CD8-positive, alpha-beta T cell (primary cell): ENCODE measurements at regions of chr16 and their contacts with region 1.

Region 1: DNA sequence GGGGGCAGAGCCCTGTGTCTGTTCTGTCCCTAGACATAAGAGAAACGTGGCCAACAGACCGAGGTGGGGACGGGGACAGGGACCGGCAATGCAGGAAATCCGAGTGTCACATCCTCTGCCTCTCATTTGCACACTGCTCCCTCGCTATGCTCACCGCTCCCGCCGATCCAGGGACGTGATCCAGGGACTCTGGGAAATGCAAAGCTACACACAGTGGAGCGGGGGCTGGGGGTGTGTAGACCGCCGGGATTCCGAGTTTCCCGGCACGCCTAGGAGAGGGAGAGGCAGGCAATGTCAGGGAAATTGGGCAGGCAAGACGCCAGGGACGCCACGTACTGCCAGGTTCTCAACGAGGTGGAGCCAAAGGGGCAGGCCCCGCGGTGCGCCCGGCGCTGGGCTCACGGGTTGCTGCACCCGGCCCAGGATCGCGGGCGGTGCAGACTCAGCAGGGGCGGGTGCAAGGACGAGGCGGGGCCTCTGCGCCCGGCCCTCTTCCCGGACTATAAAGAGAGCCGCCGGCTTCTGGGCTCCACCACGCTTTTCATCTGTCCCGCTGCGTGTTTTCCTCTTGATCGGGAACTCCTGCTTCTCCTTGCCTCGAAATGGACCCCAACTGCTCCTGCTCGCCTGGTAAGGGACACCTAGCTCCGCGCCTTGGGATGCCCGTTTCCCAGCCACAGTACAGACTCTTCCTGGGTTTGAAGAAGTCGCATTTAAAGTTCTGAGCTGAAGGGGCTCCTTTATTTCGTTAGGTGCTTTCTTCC is at the start of gene MT1X:
- DNase-seq: peak; percentile 63 to 94 (median 88)
- ATAC-seq: peak; percentile 99
- H3K4me3 ChIP-seq: peak within 1 kb of the TSS; percentile 58 to 82
- H3K4me3 Mint-ChIP-seq: peak within 1 kb of the TSS; percentile 96
- H3K27ac ChIP-seq: peak within 1 kb of the TSS; percentile 60 to 80
- H3K27ac Mint-ChIP-seq: peak within 1 kb of the TSS; percentile 97
- H3K4me1 ChIP-seq: peaks cover 18% of the 10 kb centered on the region
- H3K4me1 Mint-ChIP-seq: peaks cover 25% of the 10 kb centered on the region
- H3K27me3 ChIP-seq: no peaks in the 10 kb centered on the region
- H3K27me3 Mint-ChIP-seq: no peaks in the 10 kb centered on the region
- CTCF ChIP-seq: no peak
- total RNA-seq, gene MT1X: 18.6 to 26.2 TPM

Region 2: DNA sequence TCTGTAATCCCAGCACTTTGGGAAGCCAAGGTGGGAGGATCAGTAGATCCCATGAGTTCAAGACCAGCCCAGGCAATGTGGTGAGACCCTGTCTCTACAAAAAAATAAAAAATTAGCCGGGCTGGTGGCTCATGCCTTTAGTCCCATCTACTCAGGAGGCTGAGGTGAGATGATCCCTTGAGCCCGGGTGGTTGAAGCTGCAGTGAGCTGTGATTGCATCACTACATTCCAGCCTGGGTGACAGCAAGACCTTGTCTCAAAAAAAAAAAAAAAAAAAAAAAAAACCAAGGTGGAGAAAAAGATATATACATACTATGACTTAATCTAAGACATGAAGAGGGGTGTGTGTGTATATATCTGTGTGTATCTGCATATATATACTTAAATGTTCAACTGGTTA is 189.0 kb before region 1 on chr16:
- CTCF ChIA-PET with region 1: no interaction called
- POLR2A ChIA-PET with region 1: no interaction called
- intact Hi-C with region 1: no loop called
- DNase-seq: no peak
- ATAC-seq: no peak
- H3K4me3 ChIP-seq: no peak overlapping the region
- H3K4me3 Mint-ChIP-seq: no peak overlapping the region
- H3K27ac ChIP-seq: no peak overlapping the region
- H3K27ac Mint-ChIP-seq: no peak overlapping the region
- H3K4me1 ChIP-seq: no peaks in the 10 kb centered on the region
- H3K4me1 Mint-ChIP-seq: no peaks in the 10 kb centered on the region
- H3K27me3 ChIP-seq: no peaks in the 10 kb centered on the region
- H3K27me3 Mint-ChIP-seq: no peaks in the 10 kb centered on the region
- CTCF ChIP-seq: no peak

Region 3: DNA sequence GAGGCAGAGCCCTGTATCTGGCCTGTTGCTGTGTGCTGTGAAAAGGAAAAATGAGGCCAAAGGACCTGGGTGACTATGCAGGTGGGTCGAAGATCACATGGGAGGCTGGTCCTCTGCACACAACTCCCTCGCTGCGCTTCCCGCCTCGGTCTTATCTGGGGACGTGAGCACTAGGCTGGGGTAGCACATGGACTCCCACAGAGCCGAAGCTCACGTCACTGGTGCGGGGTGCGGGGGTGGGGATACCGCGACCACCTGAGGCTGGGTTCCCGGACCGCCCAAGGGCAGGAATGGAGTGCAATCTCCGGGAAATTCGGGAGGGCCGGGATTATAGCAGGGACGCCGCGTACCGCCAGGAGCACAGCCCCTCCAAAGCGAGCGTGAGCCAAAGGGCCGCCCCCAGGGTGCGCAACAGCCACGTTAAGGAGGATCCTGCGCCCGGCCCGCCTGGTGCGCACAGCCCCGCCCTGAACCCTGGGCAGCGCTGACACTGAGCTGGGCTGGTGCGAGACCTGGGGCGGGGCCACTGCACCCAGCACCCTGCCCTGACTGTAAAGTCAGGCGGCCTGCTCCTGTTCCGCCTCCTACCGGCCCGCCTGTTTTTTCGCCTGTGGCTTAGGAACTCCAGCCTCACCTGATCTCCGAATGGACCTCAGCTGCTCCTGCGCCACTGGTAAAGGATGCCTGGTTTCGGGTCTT is 38.9 kb before region 1 on chr16:
- CTCF ChIA-PET with region 1: interaction called, 4 read pairs
- POLR2A ChIA-PET with region 1: interaction called, 3 read pairs
- intact Hi-C with region 1: loop called (anchors 1 to 5 kb)
- DNase-seq: peak; percentile 52 to 92 (median 77)
- ATAC-seq: peak; percentile 99
- H3K4me3 ChIP-seq: peak overlapping the region; percentile 33 to 47
- H3K4me3 Mint-ChIP-seq: peak overlapping the region; percentile 71
- H3K27ac ChIP-seq: peak overlapping the region in 1 of 2 experiments; percentile 3
- H3K27ac Mint-ChIP-seq: no peak overlapping the region
- H3K4me1 ChIP-seq: peaks cover 11% of the 10 kb centered on the region
- H3K4me1 Mint-ChIP-seq: peaks cover 23% of the 10 kb centered on the region
- H3K27me3 ChIP-seq: peaks cover 3 to 5% of the 10 kb centered on the region in 2 experiments
- H3K27me3 Mint-ChIP-seq: peaks cover 23% of the 10 kb centered on the region
- CTCF ChIP-seq: peak; percentile 19

Region 4: GRCh38 chr16:56657555-56658326 is 24.4 kb before region 1 on chr16 and contains the start of gene MT1F:
- CTCF ChIA-PET with region 1: no interaction called
- POLR2A ChIA-PET with region 1: interaction called, 8 read pairs
- intact Hi-C with region 1: loop called (anchors 1 kb)
- DNase-seq: peak; percentile 32 to 86 (median 73)
- ATAC-seq: peak; percentile 78
- H3K4me3 ChIP-seq: peak within 1 kb of the TSS; percentile 68 to 70
- H3K4me3 Mint-ChIP-seq: peak within 1 kb of the TSS; percentile 97
- H3K27ac ChIP-seq: peak within 1 kb of the TSS; percentile 44 to 69
- H3K27ac Mint-ChIP-seq: peak within 1 kb of the TSS; percentile 94
- H3K4me1 ChIP-seq: peaks cover 20% of the 10 kb centered on the region
- H3K4me1 Mint-ChIP-seq: peaks cover 27% of the 10 kb centered on the region
- H3K27me3 ChIP-seq: no peaks in the 10 kb centered on the region
- H3K27me3 Mint-ChIP-seq: peaks cover 3% of the 10 kb centered on the region
- CTCF ChIP-seq: no peak
- total RNA-seq, gene MT1F: 5.6 to 7.4 TPM

Region 5: DNA sequence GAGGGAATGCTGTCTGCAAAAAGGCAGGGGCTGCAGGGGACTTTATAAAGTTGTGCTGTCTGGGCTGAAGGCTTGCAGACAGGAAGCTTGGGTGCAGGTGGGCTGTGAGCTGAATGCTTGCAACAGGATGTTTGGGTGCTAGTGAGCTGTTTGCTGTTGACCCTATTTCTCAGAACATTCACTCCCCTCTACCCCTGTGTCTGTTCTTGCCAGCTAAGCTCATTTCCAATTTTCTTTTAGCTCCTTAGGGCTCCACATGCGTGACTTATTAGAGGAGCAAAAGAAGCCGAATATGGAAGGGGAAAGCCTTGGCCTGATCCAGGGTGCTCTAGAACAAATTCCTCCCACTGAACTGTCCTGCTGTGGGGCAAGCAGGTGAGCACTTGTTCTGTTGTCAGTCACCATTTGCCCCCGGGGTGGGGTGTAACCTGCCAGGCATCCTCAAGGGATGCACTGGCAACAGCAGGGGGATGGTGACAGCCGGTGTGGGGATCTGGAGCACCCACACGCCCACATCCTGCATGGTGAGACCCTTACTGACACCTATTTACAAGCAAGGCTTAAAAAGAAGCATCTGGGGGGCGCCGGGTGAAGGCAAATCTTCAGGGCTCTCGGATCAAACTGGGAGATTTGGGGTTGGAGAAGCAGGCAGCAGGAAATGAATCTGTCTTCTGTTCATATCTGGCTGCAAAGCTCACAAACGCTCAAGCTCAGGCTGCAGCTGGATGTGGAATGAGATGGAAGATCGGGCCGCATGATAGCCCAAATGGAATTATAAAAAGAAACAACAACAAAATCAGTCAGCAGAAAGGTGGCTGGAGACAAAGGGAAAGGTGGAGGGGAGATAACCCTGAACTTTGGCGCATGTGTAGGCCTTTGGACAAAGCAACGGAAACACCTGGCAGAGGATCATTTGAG is 26.7 kb after region 1 on chr16:
- CTCF ChIA-PET with region 1: interaction called, 57 read pairs
- POLR2A ChIA-PET with region 1: interaction called, 12 read pairs
- intact Hi-C with region 1: loop called in 1 of 2 experiments (anchors 2 kb)
- DNase-seq: peak in 8 of 9 experiments; percentile 32 to 82 (median 58)
- ATAC-seq: peak; percentile 90
- H3K4me3 ChIP-seq: peak overlapping the region; percentile 53 to 65
- H3K4me3 Mint-ChIP-seq: peak overlapping the region; percentile 88
- H3K27ac ChIP-seq: peak overlapping the region; percentile 69 to 76
- H3K27ac Mint-ChIP-seq: peak overlapping the region; percentile 97
- H3K4me1 ChIP-seq: peaks cover 28% of the 10 kb centered on the region
- H3K4me1 Mint-ChIP-seq: peaks cover 62% of the 10 kb centered on the region
- H3K27me3 ChIP-seq: no peaks in the 10 kb centered on the region
- H3K27me3 Mint-ChIP-seq: no peaks in the 10 kb centered on the region
- CTCF ChIP-seq: no peak

Region 6: DNA sequence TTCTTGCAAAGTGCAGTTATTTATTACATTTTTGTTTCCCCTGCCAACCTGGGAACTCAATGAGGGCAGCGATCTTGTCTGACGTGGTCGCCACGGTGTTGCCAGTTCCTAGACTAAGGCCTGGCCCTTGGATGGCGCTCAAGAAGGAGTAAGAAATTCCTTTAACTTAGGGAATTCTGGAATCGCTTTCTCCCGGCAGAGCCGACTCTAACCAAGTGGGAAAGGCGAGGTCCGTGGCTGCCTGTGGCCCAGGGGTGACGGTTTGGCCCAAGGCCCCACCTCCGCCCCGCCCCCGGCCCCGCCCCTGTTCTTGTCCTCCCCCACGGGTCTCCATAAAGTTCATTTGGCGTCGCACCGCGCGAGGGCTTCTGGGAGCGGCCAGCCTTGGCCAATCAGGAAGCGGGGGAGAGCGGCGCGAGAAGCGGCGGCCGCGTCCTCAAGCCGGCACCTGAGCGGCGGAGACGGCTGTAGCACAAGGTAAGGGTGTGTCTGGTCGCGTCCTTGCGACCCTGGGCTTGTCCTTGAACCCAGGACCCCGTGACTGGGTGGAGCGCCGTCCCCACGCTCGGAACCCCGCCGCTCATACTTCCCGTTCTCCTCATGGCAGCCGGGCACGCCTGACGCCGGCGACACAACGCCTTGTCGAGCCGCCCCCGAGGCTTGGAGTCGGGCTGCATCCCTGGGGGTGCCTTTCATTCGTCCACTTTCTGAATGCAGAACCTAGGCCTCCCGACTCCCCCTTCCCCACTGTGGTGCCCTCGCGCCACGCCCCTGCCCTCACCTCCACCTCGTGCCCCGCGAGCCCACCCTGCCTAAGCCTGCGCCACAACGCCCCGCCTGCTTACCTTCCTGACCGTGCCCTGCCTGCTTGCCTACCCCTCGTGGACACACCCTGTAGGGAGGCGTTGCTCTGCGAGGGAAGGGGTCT is 47.9 kb after region 1 on chr16 and contains the start of gene NUP93:
- CTCF ChIA-PET with region 1: no interaction called
- POLR2A ChIA-PET with region 1: no interaction called
- intact Hi-C with region 1: loop called in 1 of 2 experiments (anchors 2 kb)
- DNase-seq: peak; percentile 76 to 94 (median 90)
- ATAC-seq: peak; percentile 94
- H3K4me3 ChIP-seq: peak within 1 kb of the TSS; percentile 79 to 87
- H3K4me3 Mint-ChIP-seq: no peak within 1 kb of the TSS
- H3K27ac ChIP-seq: peak within 1 kb of the TSS; percentile 58 to 81
- H3K27ac Mint-ChIP-seq: peak within 1 kb of the TSS; percentile 90
- H3K4me1 ChIP-seq: peaks cover 34% of the 10 kb centered on the region
- H3K4me1 Mint-ChIP-seq: peaks cover 23% of the 10 kb centered on the region
- H3K27me3 ChIP-seq: no peaks in the 10 kb centered on the region
- H3K27me3 Mint-ChIP-seq: no peaks in the 10 kb centered on the region
- CTCF ChIP-seq: no peak
- total RNA-seq, gene NUP93: 68.2 to 68.5 TPM

Region 7: DNA sequence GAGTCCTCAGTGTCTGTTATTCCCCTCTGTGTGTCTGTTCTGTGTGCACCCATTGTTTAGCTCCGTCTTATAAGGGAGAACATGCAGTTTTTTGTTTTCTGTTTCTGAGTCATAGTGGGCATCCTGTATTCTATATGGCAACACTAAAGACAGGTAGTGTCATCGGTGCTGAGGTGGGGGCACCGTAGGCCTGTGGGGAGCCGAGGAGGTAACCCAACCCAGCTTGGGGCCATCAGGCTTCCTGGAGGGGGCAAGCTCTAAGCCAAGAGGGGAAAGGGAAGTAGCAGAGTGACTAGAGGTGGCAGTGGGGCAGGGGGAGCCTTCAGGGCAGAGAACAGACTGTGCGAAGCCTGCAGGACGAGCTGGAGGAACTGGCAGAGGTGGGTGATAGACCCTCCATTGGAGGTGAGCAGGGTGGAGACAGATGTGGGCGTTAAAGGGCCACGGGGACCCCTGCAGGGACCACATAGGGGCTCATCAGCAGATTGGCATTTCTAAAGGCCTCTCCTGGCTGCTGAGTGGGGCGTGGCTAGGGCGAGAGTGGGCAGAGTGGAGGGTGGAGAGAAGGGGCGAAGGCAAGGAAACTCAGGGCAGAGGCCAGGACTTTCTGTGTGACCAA is 446.8 kb after region 1 on chr16:
- CTCF ChIA-PET with region 1: no interaction called
- POLR2A ChIA-PET with region 1: no interaction called
- intact Hi-C with region 1: no loop called
- DNase-seq: peak in 8 of 9 experiments; percentile 53 to 88 (median 70)
- ATAC-seq: peak; percentile 89
- H3K4me3 ChIP-seq: peak overlapping the region; percentile 42 to 44
- H3K4me3 Mint-ChIP-seq: peak overlapping the region; percentile 83
- H3K27ac ChIP-seq: peak overlapping the region; percentile 45 to 71
- H3K27ac Mint-ChIP-seq: peak overlapping the region; percentile 97
- H3K4me1 ChIP-seq: peaks cover 92% of the 10 kb centered on the region
- H3K4me1 Mint-ChIP-seq: peaks cover 92% of the 10 kb centered on the region
- H3K27me3 ChIP-seq: no peaks in the 10 kb centered on the region
- H3K27me3 Mint-ChIP-seq: no peaks in the 10 kb centered on the region
- CTCF ChIP-seq: no peak